PC-3 (cell line): ENCODE measurements at regions of chr14 and their contacts with region 1.

Region 1: DNA sequence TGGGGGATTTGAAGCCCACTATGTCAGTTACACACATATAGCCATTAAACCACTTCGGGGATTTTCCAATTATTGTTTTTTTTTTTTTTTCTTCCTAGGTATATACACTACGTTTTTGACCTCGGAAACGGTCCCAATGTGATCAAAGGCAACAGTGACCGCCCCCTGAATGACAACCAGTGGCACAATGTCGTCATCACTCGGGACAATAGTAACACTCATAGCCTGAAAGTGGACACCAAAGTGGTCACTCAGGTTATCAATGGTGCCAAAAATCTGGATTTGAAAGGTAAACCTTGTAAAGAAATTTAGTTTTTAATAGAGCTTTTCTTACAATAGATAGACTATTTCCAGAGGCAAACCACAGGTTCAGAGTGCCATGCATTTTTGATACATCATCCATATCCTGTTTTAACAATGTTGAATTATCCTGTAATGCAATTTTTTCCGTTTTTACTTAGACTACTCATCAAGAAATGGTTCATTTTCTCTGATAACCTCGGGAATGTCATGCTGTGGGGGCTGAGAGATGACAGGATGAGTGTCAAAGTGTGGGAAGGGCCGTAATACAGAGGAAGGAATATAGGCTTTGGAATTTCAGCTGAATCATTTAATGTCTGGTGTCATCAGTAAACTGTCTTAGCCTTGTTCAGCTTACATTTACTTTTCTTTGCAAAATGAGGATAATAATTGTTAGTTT is 797.1 kb downstream of the NRXN3 start:
- DNase-seq: peak; percentile 64
- ATAC-seq: peak; percentile 57
- H3K4me3 ChIP-seq: no peak overlapping the region
- H3K27ac ChIP-seq: peak overlapping the region; percentile 67
- H3K4me1 ChIP-seq: peaks cover 11% of the 10 kb centered on the region; the same call in 1 of the 2 replicates
- H3K27me3 ChIP-seq: no peaks in the 10 kb centered on the region
- CTCF ChIP-seq: no peak

Region 2: DNA sequence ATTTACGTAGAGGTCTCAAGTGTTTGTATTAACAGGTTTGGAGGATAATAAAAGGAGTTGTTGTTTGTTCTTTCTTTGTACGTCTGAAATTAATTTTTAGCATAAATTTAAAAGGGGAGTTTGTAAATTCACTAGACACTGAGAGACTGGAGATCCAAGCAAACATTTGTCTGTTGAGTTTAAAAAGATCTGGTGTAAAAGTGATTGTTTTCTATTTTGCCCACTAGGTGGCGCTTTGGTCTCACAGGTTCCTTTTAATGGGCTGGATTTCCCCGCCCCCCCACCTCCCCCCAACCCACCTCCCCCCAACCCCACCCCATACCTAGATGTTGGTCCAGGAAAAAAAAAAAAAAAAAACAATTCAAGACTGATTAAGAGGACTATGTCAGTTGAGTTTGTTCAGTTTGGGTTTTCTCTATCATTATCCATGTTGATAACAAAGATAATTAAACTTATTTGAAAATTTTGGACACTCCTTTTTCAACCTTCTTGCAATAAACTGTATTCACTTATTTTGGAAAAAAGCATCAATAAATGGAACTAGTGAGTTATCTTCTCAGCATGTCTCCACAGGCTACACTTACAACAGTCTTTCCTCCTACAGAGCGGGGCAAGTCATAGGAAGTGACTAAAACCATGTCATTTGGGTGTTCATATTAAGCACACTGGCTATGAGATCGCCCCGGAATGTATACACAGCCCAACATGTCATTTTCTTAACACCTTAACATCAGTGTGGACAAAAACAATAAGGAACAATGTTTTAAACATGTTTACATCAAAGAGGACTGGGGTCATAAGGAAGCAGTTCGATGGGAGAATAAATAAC is 44.0 kb after region 1 on chr14:
- CTCF ChIA-PET with region 1: no interaction called
- POLR2A ChIA-PET with region 1: no interaction called
- intact Hi-C with region 1: no loop called
- DNase-seq: peak; percentile 85
- ATAC-seq: peak; percentile 97
- H3K4me3 ChIP-seq: peak overlapping the region; percentile 23; the same call in 1 of the 2 replicates
- H3K27ac ChIP-seq: peak overlapping the region; percentile 88
- H3K4me1 ChIP-seq: peaks cover 14% of the 10 kb centered on the region
- H3K27me3 ChIP-seq: no peaks in the 10 kb centered on the region
- CTCF ChIP-seq: peak; percentile 47

Region 3: GRCh38 chr14:79118291-79118690 is 151.0 kb after region 1 on chr14:
- CTCF ChIA-PET with region 1: no interaction called
- POLR2A ChIA-PET with region 1: no interaction called
- intact Hi-C with region 1: no loop called
- DNase-seq: no peak
- ATAC-seq: no peak
- H3K4me3 ChIP-seq: no peak overlapping the region
- H3K27ac ChIP-seq: no peak overlapping the region
- H3K4me1 ChIP-seq: no peaks in the 10 kb centered on the region
- H3K27me3 ChIP-seq: no peaks in the 10 kb centered on the region; the same call in 1 of the 2 replicates
- CTCF ChIP-seq: no peak

Region 4: GRCh38 chr14:79201550-79202207 is 234.4 kb after region 1 on chr14:
- CTCF ChIA-PET with region 1: no interaction called
- POLR2A ChIA-PET with region 1: interaction called, 6 read pairs
- intact Hi-C with region 1: loop called (anchors 5 kb)
- DNase-seq: peak; percentile 23
- ATAC-seq: peak; percentile 84
- H3K4me3 ChIP-seq: no peak overlapping the region
- H3K27ac ChIP-seq: no peak overlapping the region
- H3K4me1 ChIP-seq: no peaks in the 10 kb centered on the region
- H3K27me3 ChIP-seq: no peaks in the 10 kb centered on the region
- CTCF ChIP-seq: no peak

Region 5: GRCh38 chr14:79543971-79544697 is 576.9 kb after region 1 on chr14:
- CTCF ChIA-PET with region 1: no interaction called
- POLR2A ChIA-PET with region 1: no interaction called
- intact Hi-C with region 1: loop called (anchors 1 kb)
- DNase-seq: peak; percentile 82
- ATAC-seq: peak; percentile 97
- H3K4me3 ChIP-seq: no peak overlapping the region
- H3K27ac ChIP-seq: peak overlapping the region; percentile 25; the same call in 1 of the 2 replicates
- H3K4me1 ChIP-seq: peaks cover 8% of the 10 kb centered on the region; the same call in 1 of the 2 replicates
- H3K27me3 ChIP-seq: no peaks in the 10 kb centered on the region
- CTCF ChIP-seq: peak; percentile 72